ENCODE measurements at regions of chr19 and their contacts with region 1.

Region 1: DNA sequence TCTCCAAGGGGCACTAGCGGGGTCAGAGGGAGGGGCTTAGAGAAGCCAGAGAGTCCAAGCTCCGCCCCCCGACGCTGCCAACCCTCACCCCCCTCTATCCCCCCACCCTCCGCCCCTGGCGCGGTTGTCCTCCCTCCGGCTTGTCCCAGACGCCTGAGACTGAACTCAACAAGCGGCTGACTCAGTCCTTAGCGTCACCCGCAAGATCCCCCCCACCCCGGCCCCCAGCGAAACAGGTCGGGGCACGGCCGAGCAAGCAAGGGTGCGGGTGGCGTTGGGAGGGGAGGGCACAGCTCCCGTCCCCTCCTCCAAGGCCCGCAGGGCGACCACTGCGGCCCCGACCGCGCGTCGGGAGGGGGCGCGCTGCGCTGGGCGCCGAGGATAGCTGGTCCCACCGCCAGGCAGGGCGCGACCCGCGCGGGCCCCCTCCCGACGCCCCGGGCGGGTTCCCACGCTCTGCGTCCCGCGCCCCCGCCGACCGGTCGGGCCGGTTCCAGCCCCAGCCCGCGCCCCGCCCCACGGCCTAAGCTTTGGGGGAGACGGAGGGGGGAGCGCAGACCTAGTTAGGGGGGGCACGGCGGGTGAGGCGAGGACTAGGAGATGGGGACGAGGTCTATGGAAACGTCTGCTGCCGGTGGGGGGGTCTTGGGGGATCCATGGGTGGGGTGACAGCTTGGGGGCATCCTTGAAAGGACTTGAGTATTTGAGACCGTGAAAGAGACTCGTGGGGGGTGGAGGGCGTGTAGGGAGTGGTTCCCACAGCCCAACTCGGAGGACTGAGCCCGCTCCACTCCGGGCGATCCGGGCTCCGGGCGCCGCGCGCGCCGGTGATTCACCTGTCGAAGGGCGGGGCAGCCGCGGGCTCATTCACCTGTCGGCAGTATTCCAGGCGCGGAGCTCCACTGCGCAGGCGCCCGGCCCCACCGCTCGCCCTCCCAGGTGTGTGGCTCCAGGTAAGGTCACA is 5.1 kb downstream of the NOTCH3 start:
- DNase-seq: no peak
- H3K4me3 ChIP-seq: peak overlapping the region; percentile 50
- H3K27ac ChIP-seq: no peak overlapping the region
- H3K27me3 ChIP-seq: no peaks in the 10 kb centered on the region
- CTCF ChIP-seq: peak; percentile 14; the same call in 1 of the 2 replicates

Region 2: DNA sequence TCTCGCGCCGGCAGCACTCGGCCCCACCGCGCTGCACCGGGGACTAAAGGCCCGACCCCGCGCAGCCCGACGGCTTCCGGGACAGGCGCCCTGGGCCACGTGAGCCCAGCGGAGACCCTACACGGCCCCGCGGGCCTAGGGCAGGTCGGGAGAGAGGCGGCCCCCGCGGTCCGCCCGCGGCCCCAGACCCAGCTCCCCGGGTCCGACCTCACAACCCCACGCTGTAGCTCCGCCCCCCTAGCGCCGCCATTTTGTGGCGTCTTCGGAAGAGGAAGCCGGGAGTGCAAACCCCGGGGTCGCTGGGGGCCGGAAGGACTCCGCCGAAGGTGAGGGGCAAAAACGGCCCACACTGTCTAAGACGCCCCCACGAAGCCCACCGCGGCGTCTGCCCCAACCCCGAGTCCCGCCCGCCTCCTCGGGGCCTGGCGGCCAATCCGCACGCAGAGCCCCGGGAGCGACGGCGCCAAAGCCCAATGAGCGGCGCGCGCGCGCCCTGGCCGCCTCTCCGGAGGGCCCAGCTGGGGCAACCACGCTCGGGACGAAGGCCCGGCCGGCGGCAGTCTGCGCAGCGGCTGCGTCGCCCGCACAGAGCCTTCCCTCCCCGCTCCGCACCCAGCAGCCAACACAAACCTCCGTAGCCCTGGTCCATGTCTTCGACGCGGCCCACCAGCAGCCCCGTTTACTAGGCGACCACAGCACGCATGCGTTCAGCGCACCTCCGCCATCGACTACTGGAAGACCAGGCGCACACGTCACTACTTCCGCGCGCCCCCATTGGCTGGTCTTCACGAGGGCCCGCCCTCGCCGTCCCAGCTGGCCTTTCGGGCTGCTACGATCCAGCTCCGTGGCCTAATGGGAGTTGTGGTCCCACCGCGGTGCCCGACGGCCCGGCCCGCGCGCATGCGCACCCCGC is 183.7 kb after region 1 on chr19 and contains the start of gene AKAP8:
- CTCF ChIA-PET with region 1: no interaction called
- POLR2A ChIA-PET with region 1: interaction called, 10 read pairs
- DNase-seq: peak; percentile 96
- H3K4me3 ChIP-seq: peak within 1 kb of the TSS; percentile 99
- H3K27ac ChIP-seq: peak within 1 kb of the TSS; percentile 91
- H3K27me3 ChIP-seq: no peaks in the 10 kb centered on the region
- CTCF ChIP-seq: no peak
- polyA plus RNA-seq, gene AKAP8: 11.7 and 12.4 TPM in 2 replicates